ENCODE measurements at regions of chr1 and their contacts with region 1.

Region 1: DNA sequence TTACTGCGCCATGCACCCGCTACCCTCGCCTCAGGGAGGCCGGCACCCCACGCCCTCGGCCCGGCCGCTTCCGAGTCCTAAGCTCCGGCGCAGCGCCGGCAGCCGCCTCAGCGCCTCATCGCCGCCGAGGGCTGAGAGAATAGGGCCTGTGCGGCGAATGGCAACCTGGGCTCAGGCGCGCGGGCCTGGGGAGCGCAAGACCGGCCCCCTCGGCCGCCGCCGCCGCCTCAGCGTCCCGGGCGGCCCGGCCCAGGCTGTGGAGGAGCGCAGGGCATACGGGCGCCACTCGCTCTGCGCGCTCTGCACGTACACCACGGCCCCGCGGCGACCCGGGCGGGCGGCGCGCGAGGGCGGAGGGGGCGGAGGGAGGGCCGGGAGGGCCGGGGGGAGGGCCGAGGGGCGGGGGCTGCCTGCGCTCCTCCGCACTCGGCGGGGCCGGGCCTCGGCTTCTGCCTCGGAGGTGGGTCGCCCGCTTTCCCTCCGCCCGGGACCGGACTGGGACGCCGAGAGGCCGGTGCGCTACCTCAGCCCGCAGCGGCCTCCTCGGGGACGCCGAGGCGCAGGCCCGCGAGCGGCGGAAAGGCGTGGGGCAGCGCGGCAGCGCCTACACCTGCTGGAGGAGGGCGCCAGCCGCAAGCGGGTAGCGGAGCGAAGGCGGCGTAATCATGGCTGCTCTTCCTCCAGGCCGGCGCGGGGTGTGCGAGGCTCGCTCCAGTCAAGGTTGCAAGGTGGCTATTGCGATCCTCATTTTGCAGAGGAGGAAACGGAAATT is at the start of gene EGLN1:
- DNase-seq: peak; percentile 89
- H3K4me3 ChIP-seq: peak within 1 kb of the TSS; percentile 83
- H3K27ac ChIP-seq: peak within 1 kb of the TSS; percentile 75
- H3K4me1 ChIP-seq: peaks cover 28% of the 10 kb centered on the region
- CTCF ChIP-seq: peak; percentile 48
- total RNA-seq, gene EGLN1: 17.8 and 19.0 TPM in 2 replicates

Region 2: DNA sequence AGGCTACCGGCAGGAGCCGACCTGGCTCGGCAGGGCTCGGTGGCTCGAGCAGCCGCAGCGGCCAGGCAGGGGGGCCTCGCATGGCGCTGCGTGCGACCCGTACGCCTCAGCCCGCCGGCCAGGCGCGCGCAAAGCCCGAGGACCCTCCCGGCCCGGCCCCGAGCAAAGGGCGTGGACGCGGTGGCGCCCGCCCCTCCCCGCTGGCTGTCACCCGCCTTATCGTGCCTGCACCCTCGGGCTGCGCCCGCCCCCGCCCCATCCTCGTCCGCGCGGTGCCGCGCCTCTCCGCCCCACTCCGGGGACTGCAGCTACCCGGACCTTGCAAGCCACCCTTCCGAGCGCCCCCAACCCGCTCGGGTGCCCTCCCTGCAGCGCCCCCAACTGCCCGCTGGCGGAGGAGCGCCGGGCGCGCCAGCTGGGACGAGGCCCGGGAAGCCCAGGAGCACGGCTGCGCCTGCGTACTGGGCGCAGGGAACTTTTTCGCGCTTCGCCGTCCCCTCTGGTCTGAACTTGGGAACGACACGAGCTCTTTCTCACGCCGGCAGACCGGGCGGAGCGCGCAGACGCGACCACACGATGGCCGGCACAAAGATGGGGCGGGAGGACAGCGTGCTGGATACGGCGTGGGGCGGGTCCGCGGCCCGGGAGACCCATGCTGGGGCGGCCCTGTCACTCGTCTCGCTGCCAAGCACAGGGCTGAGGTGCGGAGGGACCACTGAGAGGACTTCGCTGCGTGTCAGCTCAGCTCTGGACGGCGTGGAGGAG is 1863.4 kb before region 1 on chr1 and contains the start of gene ABCB10:
- CTCF ChIA-PET with region 1: no interaction called
- POLR2A ChIA-PET with region 1: no interaction called
- intact Hi-C with region 1: loop called (anchors 5 kb)
- DNase-seq: peak; percentile 98
- H3K4me3 ChIP-seq: peak within 1 kb of the TSS; percentile 79
- H3K27ac ChIP-seq: peak within 1 kb of the TSS; percentile 52
- H3K4me1 ChIP-seq: peaks cover 17% of the 10 kb centered on the region
- CTCF ChIP-seq: peak; percentile 80
- total RNA-seq, gene ABCB10: 14.1 and 16.4 TPM in 2 replicates

Region 3: GRCh38 chr1:231337472-231338269 is 84.5 kb before region 1 on chr1 and contains the start of gene EXOC8:
- CTCF ChIA-PET with region 1: interaction called, 5 read pairs
- POLR2A ChIA-PET with region 1: interaction called, 5 read pairs
- intact Hi-C with region 1: loop called (anchors 2 kb)
- DNase-seq: peak; percentile 97
- H3K4me3 ChIP-seq: peak within 1 kb of the TSS; percentile 99
- H3K27ac ChIP-seq: peak within 1 kb of the TSS; percentile 96
- H3K4me1 ChIP-seq: peaks cover 36% of the 10 kb centered on the region
- CTCF ChIP-seq: 0 out of 2 replicates have a peak, but pooled peaks have one; percentile 21
- total RNA-seq, gene EXOC8: 14.8 and 17.0 TPM in 2 replicates

Region 4: DNA sequence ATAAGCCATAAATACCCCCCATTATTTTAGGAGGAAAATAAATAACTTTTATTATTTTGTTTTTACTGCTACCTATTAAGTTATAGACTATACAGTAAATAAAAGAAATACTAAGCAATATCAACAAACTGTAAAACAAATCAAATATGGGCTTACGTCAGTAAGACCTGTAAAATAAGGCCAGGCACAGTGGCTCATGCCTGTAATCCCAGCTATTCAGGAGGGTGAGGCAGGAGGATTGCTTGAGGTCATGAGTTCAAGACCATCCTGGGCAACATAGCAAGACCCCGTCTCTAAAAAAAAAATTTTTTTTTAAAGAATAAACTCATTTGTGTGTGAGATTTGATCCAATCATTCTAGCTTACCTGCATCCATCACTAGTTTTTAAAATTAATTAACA is 17.9 kb before region 1 on chr1:
- CTCF ChIA-PET with region 1: no interaction called
- POLR2A ChIA-PET with region 1: interaction called, 21 read pairs
- intact Hi-C with region 1: no loop called
- DNase-seq: no peak
- H3K4me3 ChIP-seq: no peak overlapping the region
- H3K27ac ChIP-seq: no peak overlapping the region
- H3K4me1 ChIP-seq: no peaks in the 10 kb centered on the region
- CTCF ChIP-seq: no peak

Region 5: DNA sequence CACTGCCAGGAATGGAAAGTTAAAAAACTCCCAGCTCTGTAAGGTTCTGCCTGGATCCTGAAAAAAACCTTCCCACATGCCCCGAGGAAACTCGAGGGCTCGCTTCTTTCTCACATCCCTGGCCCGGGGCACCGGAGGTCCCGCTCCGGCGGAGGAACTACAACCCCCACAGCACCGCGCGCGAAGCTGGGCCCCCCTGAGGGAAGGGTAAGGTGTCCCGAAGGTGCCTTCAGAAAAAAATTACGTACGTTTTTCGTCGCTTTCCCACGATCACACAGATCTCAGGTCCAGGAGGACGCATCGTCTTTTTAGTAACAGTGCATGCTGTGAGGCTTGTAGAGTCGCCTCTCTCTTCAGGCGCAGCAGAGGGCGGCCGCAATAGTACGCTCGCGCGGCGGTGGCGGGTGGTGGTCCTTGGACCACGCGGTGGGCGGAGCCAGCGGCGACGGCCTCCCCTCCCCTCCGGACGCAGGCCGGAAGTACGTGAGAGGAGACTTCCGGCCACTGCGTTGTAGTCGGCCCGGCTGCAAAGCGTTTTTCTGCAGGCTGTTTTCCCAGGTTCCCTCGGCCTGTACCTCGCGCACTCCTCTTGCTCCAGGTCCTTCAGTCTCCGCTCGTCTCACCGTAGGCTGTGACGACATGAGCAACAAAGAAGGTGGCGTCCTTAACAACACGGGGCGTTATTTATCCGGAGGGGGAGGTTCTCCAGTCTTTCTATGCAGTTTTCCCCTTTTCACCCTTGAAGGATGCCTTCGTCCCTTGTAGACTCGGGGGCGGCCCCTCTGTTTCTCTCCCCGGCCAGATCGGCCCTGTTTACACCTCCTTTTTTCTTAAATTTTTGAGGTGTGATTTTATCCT is 106.2 kb after region 1 on chr1 and contains the start of gene TSNAX:
- CTCF ChIA-PET with region 1: no interaction called
- POLR2A ChIA-PET with region 1: interaction called, 3 read pairs
- intact Hi-C with region 1: loop called (anchors 2 kb)
- DNase-seq: peak; percentile 96
- H3K4me3 ChIP-seq: peak within 1 kb of the TSS; percentile 88
- H3K27ac ChIP-seq: peak within 1 kb of the TSS; percentile 69
- H3K4me1 ChIP-seq: peaks cover 21% of the 10 kb centered on the region
- CTCF ChIP-seq: no peak
- total RNA-seq, gene TSNAX: 17.4 and 17.8 TPM in 2 replicates

Region 6: GRCh38 chr1:232005300-232005699 is 583.1 kb after region 1 on chr1:
- CTCF ChIA-PET with region 1: no interaction called
- POLR2A ChIA-PET with region 1: no interaction called
- intact Hi-C with region 1: no loop called
- DNase-seq: no peak
- H3K4me3 ChIP-seq: no peak overlapping the region
- H3K27ac ChIP-seq: no peak overlapping the region
- H3K4me1 ChIP-seq: no peaks in the 10 kb centered on the region
- CTCF ChIP-seq: no peak

Measured in OCI-LY7 (cell line).